ENCODE measurements at regions of chr17 and their contacts with region 1.

Region 1: GRCh38 chr17:72120642-72121163 is at the start of gene SOX9:
- DNase-seq: peak; percentile 96
- H3K4me3 ChIP-seq: peak within 1 kb of the TSS; percentile 81 to 83 (median 83)
- H3K27ac ChIP-seq: peak within 1 kb of the TSS; percentile 91 to 97 (median 95)
- H3K4me1 ChIP-seq: peaks cover 25 to 35% of the 10 kb centered on the region in 2 donors
- H3K27me3 ChIP-seq: no peaks in the 10 kb centered on the region
- CTCF ChIP-seq: no peak
- POLR2A ChIP-seq: peak; percentile 84 to 99
- total RNA-seq, gene SOX9: 15.5 to 32.6 (median 23.3) TPM

Region 2: GRCh38 chr17:72539981-72540897 is 419.5 kb after region 1 on chr17:
- intact Hi-C with region 1: loop called (anchors 10 kb)
- DNase-seq: peak; percentile 81 to 83
- H3K4me3 ChIP-seq: no peak overlapping the region
- H3K27ac ChIP-seq: peak overlapping the region; percentile 66 to 68 (median 68)
- H3K4me1 ChIP-seq: peaks cover 12 to 16% of the 10 kb centered on the region in 2 donors
- H3K27me3 ChIP-seq: no peaks in the 10 kb centered on the region
- CTCF ChIP-seq: peak; percentile 50 to 100 (median 94)
- POLR2A ChIP-seq: peak in 1 of 2 donors; percentile 50

Measured in thyroid gland (tissue), 4 donors.